Activated naive CD4-positive, alpha-beta T cell treated with anti-CD3 and anti-CD28 coated beads for 36 hours (primary cell): ENCODE measurements at regions of chr1 and their contacts with region 1.

Region 1: DNA sequence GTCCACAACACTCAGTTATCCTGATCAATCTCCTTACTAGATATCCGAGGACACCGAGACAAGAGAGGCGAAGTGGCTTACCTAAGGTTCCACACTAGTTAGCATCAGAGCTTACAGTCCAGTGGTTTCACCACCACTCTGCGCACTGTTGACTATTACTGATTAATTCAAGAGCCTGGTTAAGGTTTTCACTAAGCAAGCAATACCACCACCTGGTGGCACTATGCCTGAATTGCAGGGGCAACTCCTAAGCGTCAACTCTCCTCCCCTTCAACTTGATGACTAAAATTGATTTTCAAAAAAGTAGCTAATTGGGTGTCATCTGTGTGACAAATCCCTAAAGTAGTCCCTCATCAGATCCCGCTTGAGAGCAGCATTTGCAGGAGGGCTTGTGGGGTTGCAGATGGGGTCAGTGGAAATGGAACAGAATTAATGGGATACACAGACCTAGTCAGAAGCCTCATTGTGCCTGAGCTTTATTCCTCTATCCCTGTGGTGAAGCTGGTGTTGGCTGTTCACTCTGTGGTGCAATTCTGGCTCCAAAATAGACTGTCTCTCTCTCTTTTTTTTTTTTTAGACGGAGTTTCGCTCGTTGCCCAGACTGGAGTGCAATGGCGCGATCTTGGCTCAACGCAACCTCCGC is 9.1 kb downstream of the TTC22 start:
- DNase-seq: peak; percentile 81
- H3K4me3 Mint-ChIP-seq: no peak overlapping the region
- H3K27ac Mint-ChIP-seq: peak overlapping the region; percentile 53
- H3K4me1 Mint-ChIP-seq: peaks cover 22% of the 10 kb centered on the region
- H3K27me3 Mint-ChIP-seq: no peaks in the 10 kb centered on the region

Region 2: DNA sequence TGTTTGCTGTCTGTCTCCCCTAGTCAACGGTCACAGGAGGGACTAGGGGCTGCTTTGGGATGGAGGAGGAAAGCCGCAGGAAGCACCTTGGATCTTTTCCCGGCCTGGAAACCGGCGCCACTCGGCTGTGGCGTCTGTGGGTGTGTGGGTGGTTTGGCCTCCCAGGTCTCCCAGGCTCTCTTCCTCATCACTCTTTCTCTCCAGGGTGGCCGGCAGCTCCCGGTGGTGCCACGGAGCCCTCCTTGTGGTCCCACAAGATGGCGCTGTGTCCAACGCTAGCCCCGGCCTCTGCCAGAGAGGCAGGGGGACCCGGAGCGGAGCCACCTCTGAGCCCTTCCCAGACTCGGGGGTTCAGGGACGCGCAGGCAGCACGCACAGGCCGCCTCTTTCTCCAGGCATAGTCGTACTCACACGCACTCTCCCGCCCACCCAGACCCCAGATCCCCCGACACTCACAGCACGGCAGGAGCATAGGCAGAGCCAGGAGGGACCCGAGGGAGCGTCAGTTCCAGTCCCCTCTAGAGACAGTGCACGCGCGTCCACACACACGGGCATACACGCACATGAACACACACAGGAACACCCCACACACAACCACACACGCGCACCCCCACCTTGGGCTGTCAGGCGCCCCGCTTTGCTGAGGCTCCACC is 670.4 kb before region 1 on chr1:
- CTCF ChIA-PET with region 1: interaction called, 3 read pairs
- intact Hi-C with region 1: loop called (anchors 10 kb)
- DNase-seq: peak; percentile 81
- H3K4me3 Mint-ChIP-seq: peak overlapping the region; percentile 5
- H3K27ac Mint-ChIP-seq: no peak overlapping the region
- H3K4me1 Mint-ChIP-seq: peaks cover 8% of the 10 kb centered on the region
- H3K27me3 Mint-ChIP-seq: no peaks in the 10 kb centered on the region

Region 3: GRCh38 chr1:54671985-54672608 is 119.9 kb before region 1 on chr1:
- CTCF ChIA-PET with region 1: interaction called, 7 read pairs
- intact Hi-C with region 1: loop called (anchors 1 kb)
- DNase-seq: peak; percentile 84
- H3K4me3 Mint-ChIP-seq: no peak overlapping the region
- H3K27ac Mint-ChIP-seq: no peak overlapping the region
- H3K4me1 Mint-ChIP-seq: no peaks in the 10 kb centered on the region
- H3K27me3 Mint-ChIP-seq: no peaks in the 10 kb centered on the region

Region 4: GRCh38 chr1:54826226-54826816 is 34.3 kb after region 1 on chr1:
- CTCF ChIA-PET with region 1: no interaction called
- intact Hi-C with region 1: no loop called
- DNase-seq: no peak
- H3K4me3 Mint-ChIP-seq: no peak overlapping the region
- H3K27ac Mint-ChIP-seq: no peak overlapping the region
- H3K4me1 Mint-ChIP-seq: no peaks in the 10 kb centered on the region
- H3K27me3 Mint-ChIP-seq: no peaks in the 10 kb centered on the region

Region 5: DNA sequence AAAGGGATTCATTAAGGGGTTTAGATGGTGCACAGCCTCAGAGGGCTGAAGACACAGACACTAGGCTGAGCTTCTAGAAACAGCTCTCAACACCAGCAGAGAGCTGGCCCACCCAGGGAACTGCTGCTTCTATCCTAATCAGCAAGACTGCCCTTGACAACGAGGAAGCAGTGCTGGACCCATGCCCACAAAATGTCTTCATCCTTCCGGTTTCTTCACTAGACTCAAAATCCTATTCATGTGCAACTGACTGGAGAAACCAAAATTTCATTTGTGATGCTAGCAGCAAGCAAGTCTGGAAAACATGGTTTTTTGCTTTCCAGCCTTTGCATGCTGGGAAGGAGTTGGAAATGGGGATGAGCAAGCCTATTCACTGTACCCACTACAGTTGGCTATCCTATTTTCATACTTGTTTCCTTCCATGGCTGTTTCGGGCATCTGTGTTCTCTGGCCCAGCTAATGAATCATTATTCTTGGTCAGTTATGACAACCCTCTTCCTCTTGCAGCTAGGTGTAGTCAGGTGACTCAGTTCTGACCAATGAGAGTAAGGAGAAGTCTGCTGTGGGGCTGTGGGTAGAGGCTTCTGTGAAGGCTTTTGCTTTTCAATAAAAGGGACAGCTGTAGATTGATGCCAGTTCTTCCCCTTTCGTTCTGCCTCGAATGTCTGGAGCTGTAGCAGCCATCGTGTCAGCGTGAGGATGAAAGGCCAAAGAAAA is 173.8 kb after region 1 on chr1:
- CTCF ChIA-PET with region 1: no interaction called
- intact Hi-C with region 1: no loop called
- DNase-seq: no peak
- H3K4me3 Mint-ChIP-seq: no peak overlapping the region
- H3K27ac Mint-ChIP-seq: no peak overlapping the region
- H3K4me1 Mint-ChIP-seq: no peaks in the 10 kb centered on the region
- H3K27me3 Mint-ChIP-seq: peaks cover 15% of the 10 kb centered on the region